Ascending aorta (tissue), 2 donors: ENCODE measurements at regions of chr15 and their contacts with region 1.

Region 1: DNA sequence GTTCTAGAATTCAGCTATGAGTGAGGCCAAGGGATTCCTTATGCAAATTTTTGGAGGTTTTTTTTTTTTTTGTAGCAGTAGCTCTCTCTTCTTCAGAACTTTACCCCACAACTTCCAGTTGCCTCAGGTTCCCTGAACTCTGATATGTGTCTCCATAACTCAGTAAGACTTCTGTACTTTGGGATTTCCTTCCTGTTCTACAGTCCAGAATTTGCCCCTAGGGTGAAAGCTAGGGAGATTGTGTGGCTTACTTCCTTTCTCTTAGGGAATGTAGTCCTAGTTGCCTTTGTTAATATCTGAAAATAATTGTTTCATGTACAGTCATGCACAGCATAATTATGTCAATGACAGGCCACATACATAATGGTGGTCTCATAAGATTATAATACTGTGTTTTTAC is 30.8 kb downstream of the LRRC28 start:
- DNase-seq: no peak
- H3K4me3 ChIP-seq: no peak overlapping the region
- H3K27ac ChIP-seq: no peak overlapping the region
- H3K4me1 ChIP-seq: peaks cover 0 to 7% of the 10 kb centered on the region in 2 donors
- H3K27me3 ChIP-seq: no peaks in the 10 kb centered on the region
- CTCF ChIP-seq: no peak

Region 2: GRCh38 chr15:99335508-99335907 is 53.4 kb after region 1 on chr15:
- intact Hi-C with region 1: no loop called
- DNase-seq: no peak
- H3K4me3 ChIP-seq: no peak overlapping the region
- H3K27ac ChIP-seq: no peak overlapping the region
- H3K4me1 ChIP-seq: no peaks in the 10 kb centered on the region
- H3K27me3 ChIP-seq: no peaks in the 10 kb centered on the region
- CTCF ChIP-seq: no peak

Region 3: GRCh38 chr15:99371180-99372103 is 89.3 kb after region 1 on chr15:
- intact Hi-C with region 1: loop called (anchors 1 kb)
- DNase-seq: no peak
- H3K4me3 ChIP-seq: no peak overlapping the region
- H3K27ac ChIP-seq: peak overlapping the region; percentile 30 to 56
- H3K4me1 ChIP-seq: peaks cover 0 to 11% of the 10 kb centered on the region in 2 donors
- H3K27me3 ChIP-seq: no peaks in the 10 kb centered on the region
- CTCF ChIP-seq: no peak

Region 4: GRCh38 chr15:99733268-99734039 is 451.3 kb after region 1 on chr15 and contains the start of gene LYSMD4:
- intact Hi-C with region 1: loop called (anchors 2 kb)
- DNase-seq: peak; percentile 90 to 99
- H3K4me3 ChIP-seq: peak within 1 kb of the TSS; percentile 79 to 81
- H3K27ac ChIP-seq: peak within 1 kb of the TSS; percentile 83 to 84
- H3K4me1 ChIP-seq: peaks cover 0 to 21% of the 10 kb centered on the region in 2 donors
- H3K27me3 ChIP-seq: no peaks in the 10 kb centered on the region
- CTCF ChIP-seq: no peak
- total RNA-seq, gene LYSMD4: not detected